Posterior cingulate gyrus (tissue), 11 donors: ENCODE measurements at regions of chr22 and their contacts with region 1.

Region 1: DNA sequence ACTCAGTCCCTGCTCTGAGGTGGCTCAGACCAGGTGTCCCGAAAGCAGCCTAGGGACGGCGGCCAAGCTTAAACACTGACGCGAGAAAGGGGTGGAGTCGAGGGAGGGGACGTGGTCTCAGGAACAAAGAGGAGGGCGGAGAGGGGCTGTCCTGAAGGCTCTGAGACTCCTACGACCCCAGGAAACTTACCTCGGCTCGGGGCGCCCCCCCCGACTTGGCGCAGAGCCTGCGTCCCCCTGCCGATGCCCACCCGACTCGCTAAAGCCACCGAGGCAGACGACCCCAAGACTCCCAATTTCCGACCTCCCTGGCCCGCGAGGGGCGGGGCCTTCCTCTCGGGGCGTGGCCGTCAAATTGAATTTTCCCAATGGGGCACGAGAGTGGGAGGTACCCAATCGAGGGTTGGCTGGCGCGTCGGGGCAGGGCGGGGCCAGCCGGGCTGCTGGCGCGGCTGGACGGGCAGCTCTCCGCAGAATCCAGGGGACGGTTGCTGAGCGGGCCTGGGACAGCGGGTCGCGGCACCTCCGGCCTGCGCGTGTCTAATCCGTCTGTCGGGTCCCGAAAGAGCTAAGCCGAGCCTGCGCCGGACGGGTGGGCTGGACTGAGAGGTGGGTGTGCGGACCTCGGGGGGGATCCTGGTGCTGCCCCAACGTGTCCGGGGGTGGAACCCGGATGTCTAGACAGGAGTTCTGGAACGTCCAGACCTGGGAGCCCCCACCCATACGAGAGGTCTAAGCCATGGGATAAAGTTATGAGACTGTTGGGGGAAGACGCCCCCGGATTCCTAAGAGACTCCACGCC is at the start of gene SMTN:
- DNase-seq: peak; percentile 45 to 96 (median 76)

Region 2: GRCh38 chr22:30968924-30969539 is 112.0 kb before region 1 on chr22 and contains the start of gene TUG1:
- intact Hi-C with region 1: loop called (anchors 2 kb)
- DNase-seq: peak; percentile 97 to 100 (median 98)

Region 3: DNA sequence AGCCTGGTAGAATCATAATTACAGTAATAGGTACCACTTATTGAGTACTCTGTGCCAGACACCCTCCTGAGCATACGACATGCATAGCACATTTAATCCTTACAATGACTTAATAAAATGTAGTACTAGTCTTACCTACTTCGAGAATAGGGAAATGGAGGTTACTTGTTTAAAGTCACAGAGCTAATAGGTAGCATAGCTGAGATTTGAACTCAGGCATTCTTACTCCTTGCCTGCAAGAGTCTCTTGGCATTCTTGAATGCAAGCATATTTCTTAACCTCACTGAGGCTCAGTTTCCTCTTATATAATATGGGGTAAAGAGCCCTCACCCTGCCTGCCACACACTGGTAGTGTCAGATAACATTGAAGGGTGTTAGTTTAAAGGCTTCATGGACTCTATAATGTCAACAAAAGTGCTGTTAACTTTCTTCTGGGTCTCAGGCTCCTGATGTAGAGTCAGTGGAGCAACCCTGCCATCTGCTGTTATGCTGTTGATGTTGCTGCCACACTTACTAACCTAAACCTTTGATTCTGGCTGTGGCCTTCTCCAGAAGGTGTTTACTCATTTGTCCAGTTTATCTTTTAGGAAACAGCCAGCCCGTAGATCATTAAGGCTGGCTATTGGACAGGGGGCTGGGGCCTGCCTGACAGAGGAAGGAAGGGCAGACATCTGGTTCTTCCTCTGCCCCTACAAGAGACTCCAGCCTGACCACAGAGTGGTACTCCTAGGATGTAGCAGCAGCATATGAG is 150.0 kb after region 1 on chr22:
- intact Hi-C with region 1: loop called (anchors 10 kb)
- DNase-seq: peak in 4 of 10 donors; percentile 21 to 50 (median 48)

Region 4: GRCh38 chr22:31248138-31248745 is 167.2 kb after region 1 on chr22:
- intact Hi-C with region 1: no loop called
- DNase-seq: peak in 9 of 10 donors; percentile 28 to 94 (median 58)